Activated T-helper 1 cell treated with anti-CD3 and anti-CD28 coated beads, Interleukin-12 subunit alpha, Interleukin-12 subunit beta, Interleukin-2, Interleukin-4 antibody, amounts not matched to agents 30 ng/mL and 10 ng/mL and 1 ng/mL, durations not matched to agents 14 hours and 24 hours and 36 hours (primary cell): ENCODE measurements at regions of chr6 and their contacts with region 1.

Region 1: GRCh38 chr6:55886185-55886836 is 10.9 kb upstream of the BMP5 start:
- DNase-seq: no peak
- H3K4me3 Mint-ChIP-seq: no peak overlapping the region
- H3K27ac Mint-ChIP-seq: no peak overlapping the region
- H3K4me1 Mint-ChIP-seq: no peaks in the 10 kb centered on the region
- H3K27me3 Mint-ChIP-seq: no peaks in the 10 kb centered on the region

Region 2: GRCh38 chr6:55282115-55282514 is 604.2 kb before region 1 on chr6:
- intact Hi-C with region 1: loop called (anchors 5 kb)
- DNase-seq: no peak
- H3K4me3 Mint-ChIP-seq: no peak overlapping the region
- H3K27ac Mint-ChIP-seq: no peak overlapping the region
- H3K4me1 Mint-ChIP-seq: no peaks in the 10 kb centered on the region
- H3K27me3 Mint-ChIP-seq: no peaks in the 10 kb centered on the region

Region 3: DNA sequence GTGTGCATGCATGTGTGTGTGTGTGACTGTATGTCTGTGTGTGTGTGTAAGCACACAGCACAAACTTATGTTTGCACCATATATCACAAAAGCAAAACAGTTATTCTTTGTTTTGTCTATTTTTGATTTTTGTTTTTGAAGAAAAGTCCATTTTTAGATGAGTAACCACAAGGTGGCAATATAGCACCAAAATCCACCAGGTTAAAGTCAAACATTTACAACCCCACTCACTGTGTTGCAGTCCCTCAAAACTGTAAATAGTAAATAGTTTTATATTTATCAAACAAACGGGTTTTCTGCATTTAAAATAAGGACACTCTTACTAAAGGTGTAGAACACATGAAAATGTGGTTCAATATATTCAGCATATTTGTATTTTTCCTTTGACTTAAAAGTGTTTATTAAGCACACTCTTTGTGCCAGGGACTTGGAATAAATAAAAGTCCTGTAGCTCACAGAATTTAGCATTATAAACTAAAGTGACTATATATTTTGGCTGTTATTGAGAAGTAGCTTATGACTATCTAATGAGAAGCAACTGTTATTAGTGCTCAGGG is 440.6 kb before region 1 on chr6:
- intact Hi-C with region 1: loop called (anchors 1 kb)
- DNase-seq: no peak
- H3K4me3 Mint-ChIP-seq: no peak overlapping the region
- H3K27ac Mint-ChIP-seq: no peak overlapping the region
- H3K4me1 Mint-ChIP-seq: no peaks in the 10 kb centered on the region
- H3K27me3 Mint-ChIP-seq: no peaks in the 10 kb centered on the region